ENCODE measurements at regions of chr17 and their contacts with region 1.

Region 1: GRCh38 chr17:40909351-40909750 is 24.3 kb upstream of the KRT20 start:
- DNase-seq: peak; percentile 81 to 95
- H3K4me3 ChIP-seq: no peak overlapping the region
- H3K27ac ChIP-seq: peak overlapping the region in 1 of 5 donors; percentile 30
- H3K4me1 ChIP-seq: peaks cover 0 to 9% (median 6%) of the 10 kb centered on the region in 4 donors
- H3K27me3 ChIP-seq: peaks cover 0 to 16% (median 0%) of the 10 kb centered on the region in 3 donors
- CTCF ChIP-seq: peak in 5 of 7 experiments; percentile 44 to 86 (median 72)
- EP300 ChIP-seq: no peak
- POLR2A ChIP-seq: no peak

Region 2: GRCh38 chr17:40782450-40782849 is 126.9 kb before region 1 on chr17 and contains the start of gene KRT27:
- intact Hi-C with region 1: no loop called
- DNase-seq: no peak
- H3K4me3 ChIP-seq: no peak within 1 kb of the TSS
- H3K27ac ChIP-seq: no peak within 1 kb of the TSS
- H3K4me1 ChIP-seq: no peaks in the 10 kb centered on the region
- H3K27me3 ChIP-seq: peaks cover 0 to 49% (median 9%) of the 10 kb centered on the region in 3 donors
- CTCF ChIP-seq: no peak
- EP300 ChIP-seq: no peak
- POLR2A ChIP-seq: no peak
- total RNA-seq, gene KRT27: not detected

Region 3: DNA sequence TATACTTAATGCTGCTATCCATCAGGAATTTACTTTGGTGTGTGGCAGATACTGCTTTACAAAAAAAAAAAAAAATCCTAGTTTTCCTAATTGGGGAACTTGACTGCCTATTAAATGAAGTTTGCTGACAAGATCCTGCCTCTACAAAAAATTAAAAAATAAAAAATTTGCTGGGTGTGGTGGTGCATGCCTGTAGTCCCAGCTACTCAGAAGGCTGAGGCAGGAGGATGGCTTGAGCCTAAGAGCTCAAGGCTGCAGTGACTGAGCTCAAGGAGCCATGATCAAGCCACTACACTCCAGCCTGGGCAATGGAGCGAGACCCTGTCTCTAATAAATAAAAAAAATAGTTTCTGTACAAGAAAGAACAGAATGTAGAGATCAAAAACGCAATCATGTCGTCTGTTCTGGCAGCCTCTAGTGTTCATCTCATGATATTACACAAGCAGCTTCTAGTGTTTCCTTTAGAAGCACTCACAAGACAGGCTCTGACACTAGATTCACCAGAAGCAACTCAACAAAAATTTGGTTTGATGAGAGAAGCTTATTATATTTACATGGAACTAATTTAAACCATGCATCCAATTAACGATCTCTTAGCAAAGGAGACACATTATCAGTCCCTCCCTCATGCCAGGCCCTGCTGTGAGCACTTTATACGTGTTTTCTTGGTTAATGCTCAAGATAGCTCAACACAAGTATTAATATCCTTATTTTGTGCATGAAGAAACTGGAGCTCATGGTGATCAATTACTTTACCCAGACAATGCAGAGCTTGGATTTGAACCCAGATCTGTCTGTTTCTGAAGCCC is 412.9 kb after region 1 on chr17:
- intact Hi-C with region 1: loop called (anchors 10 kb)
- DNase-seq: peak in 1 of 2 donors; percentile 69
- H3K4me3 ChIP-seq: no peak overlapping the region
- H3K27ac ChIP-seq: no peak overlapping the region
- H3K4me1 ChIP-seq: no peaks in the 10 kb centered on the region
- H3K27me3 ChIP-seq: peaks cover 0 to 3% (median 0%) of the 10 kb centered on the region in 3 donors
- CTCF ChIP-seq: peak in 5 of 7 experiments; percentile 61 to 77 (median 67)
- EP300 ChIP-seq: no peak
- POLR2A ChIP-seq: no peak

Region 4: GRCh38 chr17:41655611-41656351 is 746.4 kb after region 1 on chr17:
- intact Hi-C with region 1: loop called (anchors 10 kb)
- DNase-seq: peak; percentile 92 to 96
- H3K4me3 ChIP-seq: no peak overlapping the region
- H3K27ac ChIP-seq: peak overlapping the region; percentile 77 to 93 (median 88)
- H3K4me1 ChIP-seq: peaks cover 45 to 79% (median 65%) of the 10 kb centered on the region in 4 donors
- H3K27me3 ChIP-seq: no peaks in the 10 kb centered on the region
- CTCF ChIP-seq: no peak
- EP300 ChIP-seq: no peak
- POLR2A ChIP-seq: peak in 1 of 4 donors; percentile 18

Measured in stomach (tissue), 19 donors.